Right cardiac atrium (tissue), 5 donors: ENCODE measurements at regions of chr16 and their contacts with region 1.

Region 1: DNA sequence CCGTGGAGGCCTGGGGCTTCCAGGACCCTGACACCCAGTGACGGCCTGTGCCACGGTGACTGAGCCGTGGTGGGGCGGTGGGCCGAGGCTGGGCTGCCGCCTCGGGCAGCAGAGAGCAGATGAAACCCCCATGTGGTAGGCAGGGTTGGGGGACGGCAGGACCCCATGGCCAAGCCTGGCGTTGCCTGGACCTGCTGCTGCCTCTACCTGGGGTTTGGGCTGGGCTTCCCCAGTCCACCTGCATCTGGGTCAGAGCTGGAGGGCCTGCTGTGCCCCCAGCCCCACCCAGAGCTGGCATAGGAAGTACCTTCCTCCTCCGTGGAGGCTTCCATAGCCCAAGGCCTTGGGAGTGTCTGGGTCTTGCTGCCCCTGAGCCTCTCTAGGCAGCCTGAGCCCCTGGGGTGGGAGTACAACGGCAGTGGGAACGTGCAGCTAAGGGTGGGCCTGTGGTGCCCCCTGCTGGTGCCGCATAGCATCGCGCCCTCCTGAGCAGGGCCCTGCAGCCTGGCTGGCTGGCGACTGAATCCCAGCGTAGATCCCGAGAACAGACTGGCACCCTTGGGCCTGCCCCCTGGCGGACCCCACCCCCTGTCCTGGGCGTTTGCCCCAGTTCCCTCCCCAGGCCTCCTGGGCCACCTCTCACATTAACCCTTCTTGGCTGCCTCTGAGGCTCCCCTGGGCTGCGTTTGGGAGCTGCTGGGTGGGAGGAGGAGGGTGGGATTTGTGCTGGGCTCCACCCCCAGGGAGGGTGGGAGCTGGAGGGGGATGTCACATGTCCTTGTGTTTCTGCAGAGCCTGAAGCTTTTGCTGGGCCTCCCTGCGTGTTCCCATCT is 12.6 kb upstream of the ATP6V0C start:
- DNase-seq: peak; percentile 81 to 95 (median 94)
- ATAC-seq: peak; percentile 82 to 84
- H3K4me3 ChIP-seq: no peak overlapping the region
- H3K27ac ChIP-seq: no peak overlapping the region
- H3K4me1 ChIP-seq: peaks cover 12% of the 10 kb centered on the region
- H3K27me3 ChIP-seq: no peaks in the 10 kb centered on the region

Region 2: GRCh38 chr16:2429034-2429770 is 71.9 kb before region 1 on chr16 and contains the start of gene CCNF:
- intact Hi-C with region 1: loop called in 1 of 4 experiments (anchors 5 kb)
- DNase-seq: peak; percentile 98 to 99 (median 99)
- ATAC-seq: peak; percentile 99
- H3K4me3 ChIP-seq: peak within 1 kb of the TSS; percentile 72
- H3K27ac ChIP-seq: peak within 1 kb of the TSS; percentile 34
- H3K4me1 ChIP-seq: peaks cover 4% of the 10 kb centered on the region
- H3K27me3 ChIP-seq: no peaks in the 10 kb centered on the region
- total RNA-seq, gene CCNF: 0.78 to 1.9 (median 1.5) TPM

Region 3: DNA sequence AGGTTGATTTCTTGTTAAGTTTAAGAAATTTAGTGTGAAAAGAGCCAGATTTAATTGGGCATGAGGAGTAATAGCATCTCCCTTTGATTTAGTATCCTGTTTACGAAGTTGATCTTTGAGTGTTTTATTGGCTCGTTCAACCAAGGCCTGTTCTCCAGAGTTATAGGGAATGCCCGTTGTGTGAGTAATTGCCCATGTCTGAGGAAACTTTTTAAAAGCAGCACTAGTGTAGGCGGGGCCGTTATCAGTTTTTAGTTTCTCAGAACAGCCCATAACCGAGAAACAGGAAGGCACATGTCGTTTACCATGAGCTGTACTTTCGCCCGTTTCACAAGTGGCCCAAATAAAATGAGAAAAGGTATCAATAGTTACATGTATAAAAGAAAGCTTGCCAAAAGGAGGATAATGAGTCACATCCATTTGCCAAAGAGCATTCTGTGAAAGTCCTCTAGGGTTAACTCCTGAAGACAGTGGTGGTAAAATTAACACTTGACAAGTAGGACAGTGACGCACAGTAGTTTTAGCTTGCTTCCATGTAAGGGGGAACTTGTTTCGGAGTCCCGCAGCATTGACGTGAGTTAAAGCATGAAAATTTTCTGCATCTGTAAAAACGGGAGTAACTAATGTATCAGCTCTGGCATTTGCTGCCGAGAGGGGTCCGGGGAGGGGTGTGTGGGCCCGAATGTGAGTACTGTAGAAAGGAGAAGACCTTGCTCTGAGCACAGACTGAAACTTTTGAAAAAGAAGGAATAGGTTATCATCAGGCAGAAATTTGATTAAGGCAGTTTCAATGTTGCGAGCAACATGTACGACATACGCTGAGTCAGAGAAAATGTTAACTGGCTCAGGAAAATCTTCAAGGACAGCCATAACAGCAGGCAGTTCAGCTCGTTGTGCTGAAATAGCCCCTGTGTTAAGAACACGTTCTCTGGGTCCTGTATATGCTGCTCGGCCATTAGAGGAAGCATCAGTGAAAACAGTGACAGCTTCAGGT is 162.7 kb after region 1 on chr16:
- intact Hi-C with region 1: no loop called
- DNase-seq: no peak
- ATAC-seq: peak; percentile 27 to 55
- H3K4me3 ChIP-seq: no peak overlapping the region
- H3K27ac ChIP-seq: no peak overlapping the region
- H3K4me1 ChIP-seq: no peaks in the 10 kb centered on the region
- H3K27me3 ChIP-seq: no peaks in the 10 kb centered on the region